Right cardiac atrium (tissue), 5 donors: ENCODE measurements at regions of chr9 and their contacts with region 1.

Region 1: GRCh38 chr9:123493627-123494026 is 137.6 kb downstream of the CRB2 start:
- DNase-seq: no peak
- ATAC-seq: no peak
- H3K4me3 ChIP-seq: no peak overlapping the region
- H3K27ac ChIP-seq: no peak overlapping the region
- H3K4me1 ChIP-seq: no peaks in the 10 kb centered on the region
- H3K27me3 ChIP-seq: no peaks in the 10 kb centered on the region

Region 2: GRCh38 chr9:123434619-123435528 is 58.8 kb before region 1 on chr9:
- intact Hi-C with region 1: loop called in 1 of 4 experiments (anchors 10 kb)
- DNase-seq: no peak
- ATAC-seq: no peak
- H3K4me3 ChIP-seq: no peak overlapping the region
- H3K27ac ChIP-seq: no peak overlapping the region
- H3K4me1 ChIP-seq: no peaks in the 10 kb centered on the region
- H3K27me3 ChIP-seq: no peaks in the 10 kb centered on the region

Region 3: GRCh38 chr9:123808971-123809370 is 315.3 kb after region 1 on chr9:
- intact Hi-C with region 1: no loop called
- DNase-seq: no peak
- ATAC-seq: no peak
- H3K4me3 ChIP-seq: no peak overlapping the region
- H3K27ac ChIP-seq: no peak overlapping the region
- H3K4me1 ChIP-seq: no peaks in the 10 kb centered on the region
- H3K27me3 ChIP-seq: no peaks in the 10 kb centered on the region